Gastrocnemius medialis (tissue), 4 donors: ENCODE measurements at regions of chr9 and their contacts with region 1.

Region 1: GRCh38 chr9:94213511-94214124 is 45.5 kb upstream of the ZNF169 start:
- DNase-seq: peak; percentile 65 to 69
- ATAC-seq: peak; percentile 97
- H3K4me3 ChIP-seq: no peak overlapping the region
- H3K27ac ChIP-seq: no peak overlapping the region
- H3K4me1 ChIP-seq: peaks cover 0 to 3% of the 10 kb centered on the region in 2 donors
- H3K27me3 ChIP-seq: no peaks in the 10 kb centered on the region
- CTCF ChIP-seq: peak; percentile 82 to 89 (median 86)
- POLR2A ChIP-seq: no peak

Region 2: DNA sequence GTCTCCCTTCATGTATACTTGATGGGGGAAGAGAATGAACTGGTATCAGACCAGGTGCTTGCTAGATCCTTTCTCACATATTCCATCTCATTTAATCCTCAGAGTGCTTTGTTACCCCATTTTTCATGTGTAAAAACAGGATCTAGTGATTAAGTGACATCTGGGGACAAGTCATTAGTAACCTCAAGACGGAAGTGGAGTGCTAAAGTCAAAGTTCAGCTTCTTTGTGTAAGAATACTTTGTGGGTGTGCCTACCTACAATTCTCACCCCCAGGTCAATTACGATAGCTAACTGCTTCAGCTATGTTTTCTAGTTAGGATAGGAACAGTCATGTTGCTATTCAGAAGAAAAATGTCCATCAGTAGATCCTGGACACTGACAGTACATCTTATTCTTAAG is 757.1 kb before region 1 on chr9:
- in situ Hi-C with region 1: no loop called
- intact Hi-C with region 1: no loop called
- DNase-seq: no peak
- ATAC-seq: no peak
- H3K4me3 ChIP-seq: no peak overlapping the region
- H3K27ac ChIP-seq: peak overlapping the region in 3 of 4 donors; percentile 38 to 99 (median 96)
- H3K4me1 ChIP-seq: peaks cover 61 to 74% of the 10 kb centered on the region in 2 donors
- H3K27me3 ChIP-seq: no peaks in the 10 kb centered on the region
- CTCF ChIP-seq: no peak
- POLR2A ChIP-seq: no peak

Region 3: DNA sequence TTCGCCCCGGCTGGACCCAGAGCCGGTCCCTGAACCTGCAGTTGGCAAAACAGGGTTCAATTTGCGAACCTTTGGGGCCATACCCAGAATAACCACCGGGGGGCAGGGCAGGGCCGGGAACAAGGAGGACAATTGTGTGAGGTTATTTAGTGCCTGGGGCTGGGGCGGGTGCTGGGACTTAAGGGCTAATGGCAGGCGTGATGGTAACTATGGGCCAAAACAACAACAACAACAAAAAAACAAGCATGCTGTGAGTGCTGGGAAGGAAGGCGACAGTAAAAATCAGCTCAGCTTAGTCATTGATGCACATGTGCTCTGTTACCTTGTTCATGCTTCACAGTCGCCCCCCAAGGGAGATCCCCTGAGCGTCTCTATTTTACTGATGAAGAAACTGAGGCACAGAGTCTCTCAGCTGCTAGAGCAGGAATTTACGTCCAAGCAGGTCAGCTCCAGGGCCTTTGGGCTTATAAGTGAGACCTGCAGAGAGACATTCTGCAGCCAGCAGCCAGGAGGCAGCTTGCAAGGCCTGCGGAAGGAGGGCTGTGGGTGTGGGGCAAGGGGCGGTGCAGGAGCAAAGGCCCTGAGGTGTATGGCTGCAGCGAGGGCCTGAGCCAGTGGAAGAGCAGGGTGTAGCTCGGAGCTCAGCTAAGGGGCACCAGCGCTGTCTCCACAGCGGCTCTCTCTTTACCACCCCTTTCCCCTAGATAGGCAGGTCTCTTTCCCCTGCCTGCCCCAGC is 531.2 kb before region 1 on chr9:
- in situ Hi-C with region 1: loop called in 1 of 4 experiments (anchors 25 kb)
- intact Hi-C with region 1: no loop called
- DNase-seq: peak in 1 of 2 donors; percentile 22
- ATAC-seq: peak in 1 of 2 donors; percentile 40
- H3K4me3 ChIP-seq: no peak overlapping the region
- H3K27ac ChIP-seq: no peak overlapping the region
- H3K4me1 ChIP-seq: no peaks in the 10 kb centered on the region
- H3K27me3 ChIP-seq: no peaks in the 10 kb centered on the region
- CTCF ChIP-seq: peak; percentile 49 to 76 (median 74)
- POLR2A ChIP-seq: no peak

Region 4: GRCh38 chr9:94014065-94014654 is 199.5 kb before region 1 on chr9:
- in situ Hi-C with region 1: no loop called
- intact Hi-C with region 1: loop called (anchors 1 kb)
- DNase-seq: no peak
- ATAC-seq: peak; percentile 47 to 60
- H3K4me3 ChIP-seq: no peak overlapping the region
- H3K27ac ChIP-seq: no peak overlapping the region
- H3K4me1 ChIP-seq: no peaks in the 10 kb centered on the region
- H3K27me3 ChIP-seq: no peaks in the 10 kb centered on the region
- CTCF ChIP-seq: peak in 3 of 5 experiments; percentile 31 to 63 (median 53)
- POLR2A ChIP-seq: no peak

Region 5: GRCh38 chr9:94065535-94065961 is 148.1 kb before region 1 on chr9:
- in situ Hi-C with region 1: loop called in 3 of 4 experiments (anchors 5 to 10 kb)
- intact Hi-C with region 1: loop called (anchors 1 kb)
- DNase-seq: peak; percentile 56 to 72
- ATAC-seq: peak; percentile 84 to 91
- H3K4me3 ChIP-seq: no peak overlapping the region
- H3K27ac ChIP-seq: peak overlapping the region in 2 of 4 donors; percentile 1 to 18
- H3K4me1 ChIP-seq: no peaks in the 10 kb centered on the region
- H3K27me3 ChIP-seq: no peaks in the 10 kb centered on the region
- CTCF ChIP-seq: peak; percentile 72 to 91 (median 86)
- POLR2A ChIP-seq: no peak

Region 6: DNA sequence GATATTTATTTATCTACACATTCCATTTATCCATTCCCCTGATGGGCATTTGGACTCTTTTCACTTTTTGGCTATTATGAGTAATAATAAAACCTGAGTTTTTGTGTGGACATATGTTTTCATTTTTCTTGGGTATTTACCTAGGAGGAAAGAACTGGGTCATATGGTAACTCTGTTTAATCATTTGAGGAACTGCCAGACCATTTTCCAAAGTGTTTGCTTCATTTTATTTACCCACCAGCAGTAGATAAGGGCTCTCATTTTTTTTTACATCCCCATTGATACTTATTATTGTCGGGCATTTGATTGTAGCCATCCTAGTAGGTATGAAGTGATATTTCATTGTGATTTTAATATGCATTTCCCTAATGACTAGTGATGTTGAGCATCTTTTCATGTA is 137.1 kb before region 1 on chr9:
- in situ Hi-C with region 1: loop called in 1 of 4 experiments (anchors 10 kb)
- intact Hi-C with region 1: no loop called
- DNase-seq: no peak
- ATAC-seq: no peak
- H3K4me3 ChIP-seq: no peak overlapping the region
- H3K27ac ChIP-seq: no peak overlapping the region
- H3K4me1 ChIP-seq: no peaks in the 10 kb centered on the region
- H3K27me3 ChIP-seq: no peaks in the 10 kb centered on the region
- CTCF ChIP-seq: no peak
- POLR2A ChIP-seq: no peak

Region 7: DNA sequence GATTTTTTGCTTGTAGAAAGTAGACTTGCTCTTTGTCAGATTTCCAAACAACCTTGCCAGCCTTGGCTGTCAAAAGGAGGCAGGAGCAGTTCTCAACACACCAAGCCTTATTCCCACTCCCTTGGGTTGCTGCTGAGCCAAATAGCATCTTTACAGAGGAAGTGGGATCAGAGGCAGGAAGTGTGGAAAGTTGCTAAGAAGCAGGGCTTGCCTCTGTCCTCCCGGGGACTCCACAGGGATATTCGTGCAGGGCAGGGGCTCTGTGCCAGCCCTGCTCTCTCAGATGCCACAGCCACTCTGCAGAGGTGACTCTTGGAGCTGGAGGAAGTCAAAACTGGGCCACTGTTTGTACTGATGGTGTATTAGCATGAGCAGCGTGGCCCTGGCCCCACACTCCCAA is 105.0 kb before region 1 on chr9:
- in situ Hi-C with region 1: no loop called
- intact Hi-C with region 1: no loop called
- DNase-seq: peak in 1 of 2 donors; percentile 49
- ATAC-seq: peak; percentile 56 to 72
- H3K4me3 ChIP-seq: no peak overlapping the region
- H3K27ac ChIP-seq: peak overlapping the region; percentile 29 to 62 (median 40)
- H3K4me1 ChIP-seq: peaks cover 17 to 21% of the 10 kb centered on the region in 2 donors
- H3K27me3 ChIP-seq: no peaks in the 10 kb centered on the region
- CTCF ChIP-seq: no peak
- POLR2A ChIP-seq: no peak

Region 8: GRCh38 chr9:94139672-94140417 is 73.8 kb before region 1 on chr9:
- in situ Hi-C with region 1: no loop called
- intact Hi-C with region 1: loop called (anchors 10 kb)
- DNase-seq: peak; percentile 69 to 88
- ATAC-seq: peak; percentile 86 to 89
- H3K4me3 ChIP-seq: peak overlapping the region; percentile 23 to 47 (median 34)
- H3K27ac ChIP-seq: peak overlapping the region; percentile 82 to 87 (median 84)
- H3K4me1 ChIP-seq: peaks cover 26 to 46% of the 10 kb centered on the region in 2 donors
- H3K27me3 ChIP-seq: no peaks in the 10 kb centered on the region
- CTCF ChIP-seq: no peak
- POLR2A ChIP-seq: no peak

Region 9: DNA sequence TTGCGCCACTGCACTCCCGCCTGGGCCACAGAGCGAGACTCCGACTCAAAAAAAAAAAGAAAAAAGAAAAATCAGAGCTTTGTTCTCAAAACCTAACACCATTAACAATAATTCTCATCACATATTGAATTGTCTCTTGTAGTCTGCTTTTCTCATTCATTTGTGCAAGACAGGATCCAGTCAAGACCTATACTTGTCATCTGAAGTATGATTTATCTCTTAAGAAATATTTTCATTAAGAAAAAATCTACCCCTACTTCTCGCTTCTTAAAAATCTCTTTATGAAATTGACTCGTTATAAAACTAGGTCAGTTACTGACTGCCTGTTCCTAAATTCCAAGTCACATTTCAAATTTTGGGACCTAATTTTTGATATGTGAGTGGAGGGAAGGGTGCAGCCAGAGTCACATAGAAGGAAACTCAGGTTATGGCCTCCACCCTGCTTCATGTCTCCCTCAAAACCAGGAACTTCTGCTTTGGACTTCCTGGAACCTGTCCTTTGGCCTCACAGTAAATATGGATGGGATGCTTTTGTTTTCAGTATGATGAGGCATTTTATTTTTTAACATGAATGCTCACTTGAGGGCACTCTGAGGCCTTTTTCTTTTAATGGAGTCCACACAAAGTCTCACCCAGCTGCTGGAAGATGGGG is 64.4 kb after region 1 on chr9:
- in situ Hi-C with region 1: no loop called
- intact Hi-C with region 1: no loop called
- DNase-seq: no peak
- ATAC-seq: no peak
- H3K4me3 ChIP-seq: no peak overlapping the region
- H3K27ac ChIP-seq: no peak overlapping the region
- H3K4me1 ChIP-seq: no peaks in the 10 kb centered on the region
- H3K27me3 ChIP-seq: no peaks in the 10 kb centered on the region
- CTCF ChIP-seq: no peak
- POLR2A ChIP-seq: no peak

Region 10: DNA sequence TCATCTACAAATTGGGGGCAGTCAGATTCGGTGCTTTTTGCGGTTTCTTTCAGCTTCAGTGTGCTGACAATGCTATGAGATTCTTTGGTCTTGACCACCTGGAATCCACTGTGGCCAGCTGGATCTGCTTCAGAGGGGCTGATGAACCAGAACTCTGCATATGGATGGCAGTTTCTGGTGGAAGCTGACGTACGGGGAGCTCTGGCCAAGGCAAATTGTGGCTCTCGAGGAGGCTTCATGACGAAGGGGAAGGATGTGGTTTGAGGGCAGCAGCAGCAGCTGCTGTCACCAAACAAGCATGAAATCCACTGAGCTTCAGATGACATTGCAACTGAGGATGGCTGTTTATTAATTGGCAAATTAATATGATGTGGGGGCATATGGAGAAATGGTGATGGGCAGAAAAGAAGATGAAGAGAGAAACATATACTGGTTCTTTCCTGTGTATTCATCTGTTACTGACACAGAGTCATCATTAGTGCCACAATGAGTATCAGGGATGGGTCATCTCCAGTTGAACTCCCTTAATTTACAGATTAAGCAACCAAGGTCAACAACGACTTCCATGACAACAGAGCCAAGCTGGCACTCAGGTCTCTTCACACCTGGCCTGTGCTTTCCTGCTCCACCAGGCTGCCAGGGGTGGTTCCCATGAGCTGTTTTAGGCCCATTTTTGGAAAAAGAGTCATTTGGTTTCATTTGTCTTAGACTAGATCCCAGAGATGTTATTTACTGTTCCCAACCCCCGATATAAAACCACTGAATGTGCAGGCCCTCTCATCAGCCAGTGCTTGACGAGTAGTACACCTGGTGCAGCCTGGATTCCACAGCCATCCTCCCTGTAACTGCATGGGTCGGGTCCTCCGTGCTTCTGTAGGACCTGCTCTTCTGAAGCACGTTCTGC is 647.6 kb after region 1 on chr9:
- in situ Hi-C with region 1: no loop called
- intact Hi-C with region 1: no loop called
- DNase-seq: no peak
- ATAC-seq: peak in 1 of 2 donors; percentile 23
- H3K4me3 ChIP-seq: no peak overlapping the region
- H3K27ac ChIP-seq: peak overlapping the region; percentile 66 to 96 (median 80)
- H3K4me1 ChIP-seq: peaks cover 35 to 42% of the 10 kb centered on the region in 2 donors
- H3K27me3 ChIP-seq: no peaks in the 10 kb centered on the region
- CTCF ChIP-seq: no peak
- POLR2A ChIP-seq: no peak